Colonic mucosa (tissue), 4 donors: ENCODE measurements at regions of chr12 and their contacts with region 1.

Region 1: DNA sequence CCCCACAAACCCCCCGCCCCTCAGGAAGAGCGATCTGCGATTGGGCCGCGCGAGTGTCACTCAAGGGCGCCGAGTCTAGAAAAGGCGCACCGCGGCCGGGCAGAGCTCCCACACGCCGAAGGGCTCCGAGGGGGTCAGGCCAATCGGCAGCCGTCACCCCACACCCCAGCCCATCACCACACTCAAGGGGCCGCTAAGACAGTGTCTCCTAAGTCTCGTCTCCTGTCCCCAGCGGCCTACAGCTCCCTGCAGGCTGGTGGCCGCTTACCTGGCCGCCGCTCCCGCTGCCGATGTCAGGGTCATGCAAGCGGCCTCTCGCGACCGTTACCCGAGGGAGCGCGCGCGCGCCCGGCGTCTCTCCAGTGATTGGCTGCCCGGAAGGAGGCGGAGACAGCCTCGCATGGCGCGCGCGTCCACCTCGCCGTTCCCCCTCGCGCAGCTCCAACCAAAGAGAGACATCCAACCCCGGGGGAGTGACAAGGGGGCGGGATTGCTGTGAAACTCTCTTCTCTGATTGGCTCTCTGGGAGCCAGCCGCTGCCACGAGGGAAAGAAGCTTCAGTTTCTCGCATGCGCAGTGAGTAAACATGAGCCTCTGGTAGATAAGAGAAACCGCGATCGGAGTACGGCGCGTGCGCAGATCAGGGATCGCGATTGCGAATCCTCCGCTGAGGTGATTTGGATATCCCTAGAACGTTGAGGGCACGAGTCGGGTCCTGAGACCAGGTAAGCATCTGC is at the starts of genes MPHOSPH9 and MTRFR:
- DNase-seq: peak; percentile 99
- H3K4me3 ChIP-seq: peak within 1 kb of the TSS; percentile 75
- H3K27ac ChIP-seq: peak within 1 kb of the TSS; percentile 85
- H3K4me1 ChIP-seq: no peaks in the 10 kb centered on the region
- H3K27me3 ChIP-seq: no peaks in the 10 kb centered on the region
- CTCF ChIP-seq: no peak
- total RNA-seq, gene MPHOSPH9: 15.5 to 35.7 TPM
- total RNA-seq, gene MTRFR: 10.6 to 17.4 TPM

Region 2: GRCh38 chr12:122860346-122861090 is 372.5 kb before region 1 on chr12:
- intact Hi-C with region 1: loop called (anchors 10 kb)
- DNase-seq: peak; percentile 89
- H3K4me3 ChIP-seq: no peak overlapping the region
- H3K27ac ChIP-seq: no peak overlapping the region
- H3K4me1 ChIP-seq: peaks cover 10% of the 10 kb centered on the region
- H3K27me3 ChIP-seq: no peaks in the 10 kb centered on the region
- CTCF ChIP-seq: peak; percentile 84

Region 3: DNA sequence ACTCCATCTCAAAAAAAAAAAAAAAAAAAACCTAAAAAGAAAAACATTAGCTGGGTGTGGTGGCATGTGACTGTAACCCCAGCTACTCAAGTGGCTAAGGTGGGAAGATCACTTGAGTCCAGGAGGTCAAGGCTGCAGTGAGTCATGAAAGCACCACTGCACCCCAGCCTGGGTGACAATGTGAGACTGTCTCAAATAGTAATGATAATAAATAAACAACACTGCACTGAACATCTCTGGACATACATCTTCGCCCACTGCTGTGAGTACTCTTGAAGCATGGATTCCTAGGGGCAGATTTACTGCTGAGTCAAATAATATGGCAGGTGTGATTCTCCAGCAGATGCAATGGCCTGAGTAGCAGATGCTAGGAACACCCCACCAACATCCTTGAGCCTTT is 290.4 kb before region 1 on chr12:
- intact Hi-C with region 1: no loop called
- DNase-seq: no peak
- H3K4me3 ChIP-seq: no peak overlapping the region
- H3K27ac ChIP-seq: no peak overlapping the region
- H3K4me1 ChIP-seq: peaks cover 16% of the 10 kb centered on the region
- H3K27me3 ChIP-seq: no peaks in the 10 kb centered on the region
- CTCF ChIP-seq: no peak

Region 4: GRCh38 chr12:122980183-122981046 is 252.6 kb before region 1 on chr12 and contains the start of gene ARL6IP4:
- intact Hi-C with region 1: loop called (anchors 5 kb)
- DNase-seq: peak; percentile 57
- H3K4me3 ChIP-seq: peak within 1 kb of the TSS; percentile 99
- H3K27ac ChIP-seq: peak within 1 kb of the TSS; percentile 88
- H3K4me1 ChIP-seq: peaks cover 34% of the 10 kb centered on the region
- H3K27me3 ChIP-seq: no peaks in the 10 kb centered on the region
- CTCF ChIP-seq: no peak
- total RNA-seq, gene ARL6IP4: 130 to 192 TPM

Region 5: DNA sequence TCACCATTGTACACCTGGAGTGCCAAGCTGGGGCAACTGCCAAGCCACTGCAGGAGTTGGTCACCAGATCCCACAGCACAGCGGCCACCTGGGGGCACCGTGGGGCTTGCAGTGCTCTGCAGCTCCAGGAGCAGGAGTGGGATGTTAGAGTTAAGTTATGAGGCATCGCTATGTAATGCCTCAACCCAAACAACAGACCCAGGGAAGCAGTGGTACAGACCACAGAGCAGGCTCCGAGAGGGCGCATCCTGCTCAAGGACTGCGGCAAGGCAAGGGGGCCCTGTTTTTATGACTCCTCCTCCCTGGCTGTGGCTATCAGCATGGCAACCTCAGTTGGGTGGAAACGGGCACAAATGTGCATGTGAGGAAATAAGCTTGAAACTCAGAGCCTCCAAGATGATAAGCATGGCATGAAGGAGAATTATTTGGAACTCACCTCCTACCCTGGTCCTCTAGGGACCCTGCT is 189.4 kb before region 1 on chr12:
- intact Hi-C with region 1: loop called (anchors 5 kb)
- DNase-seq: peak; percentile 74
- H3K4me3 ChIP-seq: no peak overlapping the region
- H3K27ac ChIP-seq: peak overlapping the region; percentile 44
- H3K4me1 ChIP-seq: peaks cover 4% of the 10 kb centered on the region
- H3K27me3 ChIP-seq: no peaks in the 10 kb centered on the region
- CTCF ChIP-seq: peak; percentile 56

Region 6: DNA sequence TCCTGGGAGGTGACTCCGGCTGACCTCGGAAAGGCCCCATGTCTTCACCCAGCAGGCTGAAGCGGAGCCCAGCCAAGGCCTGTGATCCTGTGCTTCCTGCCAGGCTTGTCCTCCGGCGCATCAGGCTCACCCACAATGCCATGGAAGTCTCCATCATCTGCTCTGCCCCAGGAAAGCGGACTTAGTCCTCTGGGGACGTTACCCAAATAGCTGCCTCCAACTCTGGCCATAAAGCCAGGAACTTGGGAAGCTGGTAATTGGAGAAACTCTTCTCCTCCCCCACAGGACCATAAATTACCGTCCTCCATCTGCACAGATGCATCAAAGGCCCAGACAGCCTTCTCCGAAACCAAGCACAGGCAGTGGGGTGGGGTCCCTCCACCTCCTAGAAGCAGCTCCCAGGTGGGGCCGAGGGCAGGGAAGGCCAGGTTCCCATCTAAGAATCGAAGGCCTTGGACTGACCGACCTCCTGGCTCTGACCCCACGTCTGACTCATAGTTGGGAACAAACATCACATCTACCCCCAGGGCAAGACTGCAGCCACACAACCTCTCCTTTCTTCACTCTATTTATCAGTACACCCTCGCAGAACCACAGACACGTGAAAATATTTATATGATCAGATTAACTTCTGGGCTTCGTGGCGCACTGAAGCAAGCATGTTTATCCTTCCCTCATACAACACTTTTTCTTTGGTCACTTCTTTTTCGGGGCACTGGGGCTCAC is 138.5 kb before region 1 on chr12:
- intact Hi-C with region 1: no loop called
- DNase-seq: peak; percentile 35
- H3K4me3 ChIP-seq: no peak overlapping the region
- H3K27ac ChIP-seq: peak overlapping the region; percentile 47
- H3K4me1 ChIP-seq: no peaks in the 10 kb centered on the region
- H3K27me3 ChIP-seq: no peaks in the 10 kb centered on the region
- CTCF ChIP-seq: no peak

Region 7: GRCh38 chr12:123150744-123151456 is 82.1 kb before region 1 on chr12 and contains the start of gene PITPNM2:
- intact Hi-C with region 1: loop called (anchors 10 kb)
- DNase-seq: peak; percentile 42
- H3K4me3 ChIP-seq: peak within 1 kb of the TSS; percentile 69
- H3K27ac ChIP-seq: peak within 1 kb of the TSS; percentile 67
- H3K4me1 ChIP-seq: no peaks in the 10 kb centered on the region
- H3K27me3 ChIP-seq: no peaks in the 10 kb centered on the region
- CTCF ChIP-seq: no peak
- total RNA-seq, gene PITPNM2: 9.3 to 17.4 TPM